Common myeloid progenitor, CD34-positive (primary cell): ENCODE measurements at regions of chr2 and their contacts with region 1.

Region 1: GRCh38 chr2:238784671-238785527 is 63.0 kb upstream of the TWIST2 start:
- DNase-seq: peak; percentile 57 to 76 (median 67)
- H3K4me3 ChIP-seq: no peak overlapping the region
- H3K27ac ChIP-seq: no peak overlapping the region
- H3K4me1 ChIP-seq: no peaks in the 10 kb centered on the region
- H3K27me3 ChIP-seq: peaks cover 0 to 8% (median 7%) of the 10 kb centered on the region in 5 experiments

Region 2: DNA sequence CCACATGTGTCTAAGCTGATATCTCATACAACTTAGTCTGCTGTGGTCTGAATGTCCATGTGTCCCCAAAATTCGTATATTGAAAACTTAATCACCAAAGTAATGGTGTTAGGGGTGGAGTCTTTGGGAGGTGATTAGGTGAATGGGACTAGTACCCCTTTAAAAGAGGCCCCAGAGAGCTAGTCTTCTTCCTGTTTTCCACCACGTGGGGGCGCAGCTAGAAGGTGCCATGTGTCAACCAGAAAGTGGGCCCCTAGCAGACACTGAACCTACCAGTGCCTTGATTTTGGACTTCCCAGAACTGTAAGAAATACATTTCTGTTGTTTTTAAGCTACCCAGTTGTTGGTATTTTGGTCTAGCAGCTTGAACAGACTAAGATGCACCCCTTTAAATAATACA is 271.6 kb before region 1 on chr2:
- CTCF ChIA-PET with region 1: interaction called, 10 read pairs
- POLR2A ChIA-PET with region 1: interaction called, 3 read pairs
- DNase-seq: peak; percentile 22 to 55 (median 52)
- H3K4me3 ChIP-seq: no peak overlapping the region
- H3K27ac ChIP-seq: no peak overlapping the region
- H3K4me1 ChIP-seq: no peaks in the 10 kb centered on the region
- H3K27me3 ChIP-seq: peaks cover 0 to 10% (median 2%) of the 10 kb centered on the region in 5 experiments

Region 3: DNA sequence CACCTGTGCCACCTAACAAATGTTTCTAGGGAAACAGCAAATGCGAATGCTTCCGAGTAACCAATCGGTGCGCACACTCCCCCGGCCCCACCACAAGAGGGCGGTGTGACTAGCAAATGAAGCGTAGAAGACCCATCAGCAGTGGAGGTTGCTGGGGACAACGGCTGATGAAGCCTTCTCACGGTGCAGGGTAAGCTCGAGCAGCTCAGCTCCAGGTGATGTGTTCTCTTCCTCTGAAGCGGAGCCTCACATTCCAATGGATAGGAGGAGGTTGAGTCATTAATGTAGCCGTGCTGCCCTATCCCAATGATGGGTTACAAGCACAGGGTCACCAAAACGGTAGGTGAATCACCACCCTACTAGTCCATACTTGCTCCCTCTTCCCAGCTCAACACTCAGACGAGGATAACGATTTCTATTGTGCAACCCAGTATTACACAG is 64.6 kb before region 1 on chr2:
- CTCF ChIA-PET with region 1: interaction called, 29 read pairs
- POLR2A ChIA-PET with region 1: interaction called, 5 read pairs
- DNase-seq: peak; percentile 58 to 79 (median 74)
- H3K4me3 ChIP-seq: no peak overlapping the region
- H3K27ac ChIP-seq: no peak overlapping the region
- H3K4me1 ChIP-seq: no peaks in the 10 kb centered on the region
- H3K27me3 ChIP-seq: peaks cover 0 to 27% (median 7%) of the 10 kb centered on the region in 5 experiments